ENCODE measurements at regions of chrX and their contacts with region 1.

Region 1: DNA sequence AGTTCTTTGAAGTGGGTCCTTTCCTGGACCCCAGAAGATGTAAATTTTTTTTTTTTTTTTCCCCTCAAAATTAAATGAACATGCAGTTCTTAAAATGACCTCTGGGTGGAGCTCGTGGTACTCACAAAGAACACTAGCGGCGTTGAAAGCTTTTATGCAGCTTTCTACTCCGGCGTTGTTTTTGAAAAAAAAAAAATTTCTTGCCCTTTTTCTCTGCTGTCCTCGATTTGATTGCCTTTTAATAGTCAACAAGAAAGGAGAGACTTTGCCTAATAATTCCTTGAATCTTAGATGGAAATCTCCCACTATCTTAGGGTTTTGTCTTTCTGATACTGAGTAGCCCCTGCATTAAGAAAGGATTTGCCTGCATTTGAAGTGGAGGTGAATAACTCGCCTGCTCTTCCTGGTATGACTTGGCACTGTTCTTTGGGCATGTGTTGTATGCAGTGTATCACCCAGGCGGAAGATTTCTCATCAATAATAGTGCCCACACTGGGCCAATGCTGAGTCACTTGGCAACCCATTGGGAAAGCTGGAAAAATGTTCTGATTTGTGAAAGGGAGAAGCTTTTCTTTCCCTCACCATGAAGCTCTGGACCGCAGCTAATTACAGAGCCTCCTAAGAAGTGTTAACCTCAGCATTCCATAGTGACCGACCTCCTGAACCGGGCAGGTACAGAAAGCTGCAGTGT is 104.0 kb downstream of the PHEX start:
- DNase-seq: peak in 1 of 10 donors; percentile 8
- H3K4me3 ChIP-seq: peak overlapping the region in 2 of 59 donors; percentile 6 to 40
- H3K27ac ChIP-seq: peak overlapping the region in 13 of 59 donors; percentile 0 to 57 (median 27)
- H3K27me3 ChIP-seq: peaks cover 0 to 77% (median 21%) of the 10 kb centered on the region in 45 donors
- CTCF ChIP-seq: peak; percentile 49 to 86 (median 74)

Region 2: GRCh38 chrX:22192417-22193060 is 56.4 kb after region 1 on chrX:
- intact Hi-C with region 1: loop called in 1 of 2 experiments (anchors 5 kb)
- DNase-seq: peak; percentile 40 to 74 (median 58)
- H3K4me3 ChIP-seq: no peak overlapping the region
- H3K27ac ChIP-seq: no peak overlapping the region
- H3K27me3 ChIP-seq: peaks cover 0 to 83% (median 22%) of the 10 kb centered on the region in 45 donors
- CTCF ChIP-seq: peak; percentile 28 to 82 (median 70)

Region 3: DNA sequence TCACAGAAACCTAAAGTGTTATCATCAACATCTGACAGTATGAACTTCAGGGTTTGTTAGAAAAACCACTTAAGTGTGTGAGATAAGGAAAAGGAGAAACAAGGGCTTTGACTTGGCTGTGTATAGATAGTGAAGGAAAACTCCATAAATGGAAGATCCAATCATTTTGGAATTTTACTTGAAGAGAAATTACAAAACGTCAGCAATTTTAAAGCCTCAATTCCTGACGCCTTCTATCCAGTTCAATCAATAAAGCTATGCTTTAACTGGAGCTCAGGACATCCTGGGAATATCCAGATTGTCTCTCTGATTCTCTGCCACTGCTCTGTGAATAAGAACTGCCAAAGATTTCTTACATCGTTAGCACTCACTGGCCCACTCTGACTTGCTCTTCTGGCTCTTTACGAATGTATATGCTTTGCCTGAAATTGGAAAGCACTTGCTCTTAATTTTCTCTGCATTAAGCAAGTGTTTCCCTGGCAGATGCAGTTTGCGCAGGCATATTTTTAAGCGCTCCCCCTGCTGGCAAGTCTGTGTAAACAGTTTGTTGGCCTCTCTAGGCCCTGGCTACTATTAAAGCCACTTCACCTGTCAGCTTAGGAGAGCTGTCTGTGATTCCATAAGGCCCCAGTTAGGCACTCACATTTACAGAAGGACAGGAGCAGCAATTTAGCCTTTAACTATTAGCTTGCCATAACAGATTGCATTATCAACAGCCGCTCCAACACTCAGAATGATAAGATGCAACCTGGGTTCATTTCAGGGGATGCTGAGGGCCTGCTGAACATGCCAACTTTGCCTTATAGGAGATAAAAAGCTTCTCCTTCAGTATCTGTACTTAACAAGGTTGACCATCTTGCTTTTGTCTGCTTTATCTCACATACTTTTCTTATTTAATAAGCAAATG is 612.2 kb after region 1 on chrX:
- intact Hi-C with region 1: loop called in 1 of 2 experiments (anchors 10 kb)
- DNase-seq: peak in 5 of 10 donors; percentile 36 to 67 (median 46)
- H3K4me3 ChIP-seq: no peak overlapping the region
- H3K27ac ChIP-seq: no peak overlapping the region
- H3K27me3 ChIP-seq: peaks cover 0 to 54% (median 7%) of the 10 kb centered on the region in 45 donors
- CTCF ChIP-seq: peak; percentile 49 to 83 (median 73)

Measured in dorsolateral prefrontal cortex (tissue), 120 donors.